ENCODE measurements at regions of chr2 and their contacts with region 1.

Region 1: GRCh38 chr2:237154082-237154638 is 68.5 kb downstream of the COPS8 start:
- DNase-seq: peak; percentile 78
- ATAC-seq: peak; percentile 7
- H3K4me3 Mint-ChIP-seq: no peak overlapping the region
- H3K27ac Mint-ChIP-seq: no peak overlapping the region
- H3K4me1 Mint-ChIP-seq: peaks cover 44% of the 10 kb centered on the region
- H3K27me3 Mint-ChIP-seq: peaks cover 4% of the 10 kb centered on the region

Region 2: GRCh38 chr2:237291138-237291792 is 137.1 kb after region 1 on chr2:
- CTCF ChIA-PET with region 1: no interaction called
- POLR2A ChIA-PET with region 1: no interaction called
- intact Hi-C with region 1: loop called in 1 of 2 experiments (anchors 5 kb)
- DNase-seq: peak; percentile 74
- ATAC-seq: peak; percentile 88
- H3K4me3 Mint-ChIP-seq: peak overlapping the region; percentile 42
- H3K27ac Mint-ChIP-seq: peak overlapping the region; percentile 79
- H3K4me1 Mint-ChIP-seq: peaks cover 9% of the 10 kb centered on the region
- H3K27me3 Mint-ChIP-seq: peaks cover 44% of the 10 kb centered on the region

Region 3: GRCh38 chr2:237421542-237422116 is 267.5 kb after region 1 on chr2:
- CTCF ChIA-PET with region 1: interaction called, 19 read pairs
- POLR2A ChIA-PET with region 1: no interaction called
- intact Hi-C with region 1: no loop called
- DNase-seq: peak; percentile 90
- ATAC-seq: peak; percentile 95
- H3K4me3 Mint-ChIP-seq: peak overlapping the region; percentile 50
- H3K27ac Mint-ChIP-seq: peak overlapping the region; percentile 83
- H3K4me1 Mint-ChIP-seq: peaks cover 45% of the 10 kb centered on the region
- H3K27me3 Mint-ChIP-seq: peaks cover 4% of the 10 kb centered on the region

Region 4: GRCh38 chr2:237474931-237475703 is 321.0 kb after region 1 on chr2:
- CTCF ChIA-PET with region 1: interaction called, 13 read pairs
- POLR2A ChIA-PET with region 1: no interaction called
- intact Hi-C with region 1: loop called (anchors 1 kb)
- DNase-seq: peak; percentile 86
- ATAC-seq: peak; percentile 72
- H3K4me3 Mint-ChIP-seq: peak overlapping the region; percentile 73
- H3K27ac Mint-ChIP-seq: peak overlapping the region; percentile 89
- H3K4me1 Mint-ChIP-seq: peaks cover 21% of the 10 kb centered on the region
- H3K27me3 Mint-ChIP-seq: peaks cover 15% of the 10 kb centered on the region

Region 5: DNA sequence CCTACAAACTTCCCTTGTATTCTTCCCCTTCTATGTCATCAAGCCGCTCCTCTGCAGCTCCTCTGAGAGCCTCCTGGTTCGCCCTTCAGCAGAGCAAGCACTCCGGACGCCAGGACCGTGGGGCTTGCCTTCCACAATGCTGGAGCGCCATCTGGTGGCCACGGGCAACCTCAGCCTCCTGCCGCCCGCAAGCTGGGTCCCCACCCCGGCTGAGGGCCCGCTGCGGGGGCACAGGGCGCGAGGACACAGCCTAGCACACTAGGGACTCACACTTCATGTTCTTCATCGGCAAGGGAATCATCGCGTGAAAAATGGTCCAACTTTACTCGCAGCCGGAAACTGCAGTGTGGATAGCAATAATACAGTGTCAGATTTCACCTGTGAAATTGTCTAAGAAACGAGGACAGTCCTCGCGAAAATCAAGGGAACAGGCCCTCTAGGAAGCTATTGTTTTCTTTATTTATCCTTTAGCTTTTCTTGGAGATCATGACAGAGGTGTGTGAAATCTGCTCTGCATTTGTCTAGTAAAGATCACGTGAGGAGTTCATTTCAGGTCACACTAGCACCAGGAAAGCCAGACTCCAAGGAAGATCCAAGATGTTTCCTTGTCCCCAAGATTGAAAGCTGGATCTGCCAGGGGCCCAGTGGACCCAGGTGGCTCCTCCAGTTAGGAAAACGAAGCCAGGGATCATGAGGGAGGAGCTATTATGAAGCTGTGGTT is 418.0 kb after region 1 on chr2:
- CTCF ChIA-PET with region 1: interaction called, 18 read pairs
- POLR2A ChIA-PET with region 1: no interaction called
- intact Hi-C with region 1: loop called (anchors 1 kb)
- DNase-seq: peak; percentile 95
- ATAC-seq: peak; percentile 99
- H3K4me3 Mint-ChIP-seq: no peak overlapping the region
- H3K27ac Mint-ChIP-seq: no peak overlapping the region
- H3K4me1 Mint-ChIP-seq: no peaks in the 10 kb centered on the region
- H3K27me3 Mint-ChIP-seq: no peaks in the 10 kb centered on the region